ENCODE measurements at regions of chrX and their contacts with region 1.

Region 1: GRCh38 chrX:104136241-104137019 is 20.4 kb downstream of the SLC25A53 start:
- DNase-seq: peak; percentile 60
- ATAC-seq: peak; percentile 74
- H3K4me3 Mint-ChIP-seq: no peak overlapping the region
- H3K27ac Mint-ChIP-seq: no peak overlapping the region
- H3K4me1 Mint-ChIP-seq: peaks cover 22% of the 10 kb centered on the region
- H3K27me3 Mint-ChIP-seq: no peaks in the 10 kb centered on the region

Region 2: DNA sequence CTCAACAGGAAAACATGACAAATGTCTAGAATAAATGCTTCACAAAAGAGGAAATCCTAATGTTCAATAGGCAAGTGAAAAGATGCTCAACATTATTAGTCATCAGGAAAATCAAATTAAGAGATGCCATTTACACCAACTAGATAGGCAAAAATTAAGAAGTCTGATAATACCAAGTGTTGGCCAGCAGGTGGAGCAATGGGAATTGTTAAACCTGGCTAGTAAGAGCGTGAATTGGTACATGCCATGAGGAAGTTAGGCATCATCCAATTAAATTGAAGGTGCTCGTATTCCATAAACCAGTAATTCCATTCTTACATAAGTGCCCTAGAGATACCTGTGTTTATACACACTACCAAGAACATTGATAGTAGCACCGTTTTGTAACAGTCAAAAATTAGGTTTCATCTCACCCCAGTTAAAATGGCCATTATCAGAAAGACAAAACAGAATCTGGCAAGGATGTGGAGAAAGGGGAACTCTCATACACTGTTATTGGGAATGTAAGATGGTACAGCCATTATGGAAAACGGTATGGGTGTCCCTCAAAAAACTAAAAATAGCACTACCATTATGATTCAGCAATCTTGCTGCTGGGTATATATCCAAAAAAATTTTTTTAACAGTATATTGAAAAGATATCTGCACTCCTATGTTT is 38.1 kb before region 1 on chrX:
- CTCF ChIA-PET with region 1: interaction called, 10 read pairs
- DNase-seq: peak; percentile 55
- ATAC-seq: peak; percentile 55
- H3K4me3 Mint-ChIP-seq: no peak overlapping the region
- H3K27ac Mint-ChIP-seq: no peak overlapping the region
- H3K4me1 Mint-ChIP-seq: peaks cover 3% of the 10 kb centered on the region
- H3K27me3 Mint-ChIP-seq: no peaks in the 10 kb centered on the region

Region 3: DNA sequence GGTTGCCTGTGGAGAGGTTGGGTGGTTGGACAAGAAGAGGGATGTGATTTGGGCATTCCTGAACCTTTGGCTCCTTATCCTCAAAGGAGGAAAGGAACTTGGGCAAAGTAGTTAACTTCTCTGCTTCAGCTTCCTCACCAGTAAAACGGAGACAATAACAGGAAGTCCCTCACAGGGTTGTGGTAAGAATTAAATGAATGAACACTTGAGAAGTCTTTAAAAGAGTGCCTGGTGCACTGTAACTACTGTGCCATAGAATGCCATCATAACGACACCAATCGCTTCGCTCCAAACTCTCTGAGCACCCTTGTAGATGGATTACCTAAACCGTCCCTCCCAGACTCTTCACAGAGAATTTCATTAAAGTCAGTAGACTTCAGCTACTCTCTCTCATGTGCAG is 13.6 kb before region 1 on chrX:
- CTCF ChIA-PET with region 1: interaction called, 10 read pairs
- DNase-seq: no peak
- ATAC-seq: peak; percentile 83
- H3K4me3 Mint-ChIP-seq: peak overlapping the region; percentile 25
- H3K27ac Mint-ChIP-seq: peak overlapping the region; percentile 80
- H3K4me1 Mint-ChIP-seq: peaks cover 32% of the 10 kb centered on the region
- H3K27me3 Mint-ChIP-seq: no peaks in the 10 kb centered on the region